GM12878 (cell line): ENCODE measurements at regions of chr11 and their contacts with region 1.

Region 1: DNA sequence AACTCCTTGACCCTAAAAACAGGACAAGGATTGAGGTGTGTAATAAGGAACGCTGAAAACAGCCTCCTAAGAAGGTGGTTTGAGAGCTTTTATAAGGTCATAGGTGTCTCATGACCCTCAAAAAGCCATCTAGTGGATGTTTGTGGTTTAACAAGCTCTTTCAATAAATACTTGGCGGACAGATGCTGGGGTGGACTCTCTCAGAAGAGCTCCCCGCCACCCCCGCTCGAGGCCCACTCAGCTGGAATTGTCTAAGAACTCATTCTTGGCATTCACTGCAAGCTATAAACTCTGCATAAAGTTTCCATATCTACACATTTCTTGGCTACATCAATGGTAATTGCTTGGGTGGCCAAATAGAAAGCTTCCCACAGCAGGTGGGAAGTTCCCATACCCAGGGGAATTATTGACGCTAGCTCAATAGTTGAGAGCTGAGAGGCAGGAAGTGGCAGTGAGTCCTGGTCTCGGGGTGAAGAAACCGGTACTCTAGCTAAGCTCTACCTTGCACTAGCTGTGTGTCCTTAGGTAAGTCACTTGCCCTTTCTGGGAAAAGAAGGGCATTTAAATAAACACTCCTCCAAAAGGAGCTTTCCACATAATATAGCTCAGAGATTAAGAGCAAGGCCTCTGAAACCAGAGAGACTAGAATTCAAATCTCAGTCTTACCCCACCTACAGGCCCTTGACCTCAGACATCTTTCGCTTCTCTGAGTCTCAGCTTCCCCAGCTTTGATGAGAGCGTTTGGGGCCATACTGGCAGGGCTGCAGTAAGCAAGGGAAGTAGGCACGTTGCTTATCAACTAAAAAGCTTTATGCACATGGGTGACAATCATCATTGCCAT is 6.4 kb downstream of the MS4A15 start:
- DNase-seq: peak; percentile 94
- ATAC-seq: peak; percentile 82
- H3K4me3 ChIP-seq: peak overlapping the region; percentile 0; the same call in 1 of the 2 replicates
- H3K27ac ChIP-seq: peak overlapping the region; percentile 96
- H3K4me1 ChIP-seq: peaks cover 61% of the 10 kb centered on the region
- H3K27me3 ChIP-seq: no peaks in the 10 kb centered on the region
- CTCF ChIP-seq: peak; percentile 35 to 64 (median 54); a peak in 5 of 6 replicates
- EP300 ChIP-seq: peak; percentile 70 to 79; a peak in 3 of 4 replicates
- POLR2A ChIP-seq: no peak; the same call in 1 of the 2 replicates
- RAD21 ChIP-seq: peak; percentile 36; the same call in 1 of the 2 replicates

Region 2: GRCh38 chr11:60265373-60266214 is 497.5 kb before region 1 on chr11:
- CTCF ChIA-PET with region 1: interaction called, 3 read pairs
- POLR2A ChIA-PET with region 1: no interaction called
- RAD21 ChIA-PET with region 1: no interaction called
- SMC1A ChIA-PET with region 1: interaction called, 3 read pairs
- in situ Hi-C with region 1: no loop called
- intact Hi-C with region 1: loop called (anchors 5 kb)
- DNase-seq: peak; percentile 44
- ATAC-seq: peak; percentile 76
- H3K4me3 ChIP-seq: no peak overlapping the region
- H3K27ac ChIP-seq: no peak overlapping the region
- H3K4me1 ChIP-seq: no peaks in the 10 kb centered on the region
- H3K27me3 ChIP-seq: no peaks in the 10 kb centered on the region
- CTCF ChIP-seq: peak; percentile 49 to 80 (median 74); a peak in 5 of 6 replicates
- EP300 ChIP-seq: no peak
- POLR2A ChIP-seq: no peak
- RAD21 ChIP-seq: peak; percentile 96

Region 3: DNA sequence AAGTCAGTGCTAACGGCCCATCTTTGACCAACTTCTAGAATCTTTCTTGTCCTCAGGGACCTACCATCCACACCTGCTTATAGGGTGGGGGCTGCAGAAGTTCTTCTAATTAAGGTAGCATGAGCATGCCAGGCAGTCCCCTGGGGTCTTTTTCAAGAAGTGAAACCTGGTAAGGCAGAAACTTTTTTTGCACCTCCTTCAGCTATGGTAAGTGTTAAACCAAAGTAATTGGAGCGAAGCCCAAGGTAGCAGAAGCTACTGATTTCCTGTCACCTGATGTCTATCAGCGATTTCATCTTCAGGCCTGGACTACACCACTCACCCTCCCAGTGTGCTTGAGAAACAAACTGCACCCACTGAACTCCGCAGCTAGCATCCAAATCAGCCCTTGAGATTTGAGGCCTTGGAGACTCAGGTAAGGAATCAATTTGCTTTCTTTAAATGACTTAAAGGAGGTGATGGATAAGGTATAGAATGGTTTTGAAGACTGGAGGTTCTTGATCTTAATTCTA is 307.5 kb before region 1 on chr11 and contains the start of gene MS4A1:
- CTCF ChIA-PET with region 1: interaction called, 25 read pairs
- POLR2A ChIA-PET with region 1: interaction called, 3 read pairs
- RAD21 ChIA-PET with region 1: interaction called, 27 read pairs
- SMC1A ChIA-PET with region 1: interaction called, 16 read pairs
- in situ Hi-C with region 1: no loop called
- intact Hi-C with region 1: no loop called
- DNase-seq: peak; percentile 98
- ATAC-seq: peak; percentile 82
- H3K4me3 ChIP-seq: peak within 1 kb of the TSS; percentile 89
- H3K27ac ChIP-seq: peak within 1 kb of the TSS; percentile 93
- H3K4me1 ChIP-seq: peaks cover 21% of the 10 kb centered on the region
- H3K27me3 ChIP-seq: no peaks in the 10 kb centered on the region
- CTCF ChIP-seq: no peak
- EP300 ChIP-seq: peak; percentile 98 to 99
- POLR2A ChIP-seq: peak; percentile 90
- RAD21 ChIP-seq: 0 out of 2 replicates have a peak, but pooled peaks have one; percentile 14
- polyA plus RNA-seq, gene MS4A1: 730 to 1,013 TPM

Region 4: GRCh38 chr11:60680455-60681119 is 82.5 kb before region 1 on chr11:
- CTCF ChIA-PET with region 1: interaction called, 18 read pairs
- POLR2A ChIA-PET with region 1: interaction called, 4 read pairs
- RAD21 ChIA-PET with region 1: interaction called, 20 read pairs
- SMC1A ChIA-PET with region 1: interaction called, 12 read pairs
- in situ Hi-C with region 1: no loop called
- intact Hi-C with region 1: loop called (anchors 1 kb)
- DNase-seq: no peak
- ATAC-seq: no peak
- H3K4me3 ChIP-seq: no peak overlapping the region
- H3K27ac ChIP-seq: no peak overlapping the region
- H3K4me1 ChIP-seq: peaks cover 14% of the 10 kb centered on the region
- H3K27me3 ChIP-seq: no peaks in the 10 kb centered on the region
- CTCF ChIP-seq: no peak
- EP300 ChIP-seq: no peak
- POLR2A ChIP-seq: no peak
- RAD21 ChIP-seq: no peak

Region 5: GRCh38 chr11:60775420-60775961 is 12.4 kb after region 1 on chr11:
- CTCF ChIA-PET with region 1: interaction called, 184 read pairs
- POLR2A ChIA-PET with region 1: interaction called, 7 read pairs
- RAD21 ChIA-PET with region 1: interaction called, 119 read pairs
- SMC1A ChIA-PET with region 1: interaction called, 143 read pairs
- in situ Hi-C with region 1: no loop called
- intact Hi-C with region 1: no loop called
- DNase-seq: peak; percentile 67
- ATAC-seq: peak; percentile 94
- H3K4me3 ChIP-seq: no peak overlapping the region
- H3K27ac ChIP-seq: no peak overlapping the region
- H3K4me1 ChIP-seq: peaks cover 11% of the 10 kb centered on the region
- H3K27me3 ChIP-seq: no peaks in the 10 kb centered on the region
- CTCF ChIP-seq: peak; percentile 86 to 94 (median 89)
- EP300 ChIP-seq: no peak
- POLR2A ChIP-seq: no peak
- RAD21 ChIP-seq: peak; percentile 81

Region 6: DNA sequence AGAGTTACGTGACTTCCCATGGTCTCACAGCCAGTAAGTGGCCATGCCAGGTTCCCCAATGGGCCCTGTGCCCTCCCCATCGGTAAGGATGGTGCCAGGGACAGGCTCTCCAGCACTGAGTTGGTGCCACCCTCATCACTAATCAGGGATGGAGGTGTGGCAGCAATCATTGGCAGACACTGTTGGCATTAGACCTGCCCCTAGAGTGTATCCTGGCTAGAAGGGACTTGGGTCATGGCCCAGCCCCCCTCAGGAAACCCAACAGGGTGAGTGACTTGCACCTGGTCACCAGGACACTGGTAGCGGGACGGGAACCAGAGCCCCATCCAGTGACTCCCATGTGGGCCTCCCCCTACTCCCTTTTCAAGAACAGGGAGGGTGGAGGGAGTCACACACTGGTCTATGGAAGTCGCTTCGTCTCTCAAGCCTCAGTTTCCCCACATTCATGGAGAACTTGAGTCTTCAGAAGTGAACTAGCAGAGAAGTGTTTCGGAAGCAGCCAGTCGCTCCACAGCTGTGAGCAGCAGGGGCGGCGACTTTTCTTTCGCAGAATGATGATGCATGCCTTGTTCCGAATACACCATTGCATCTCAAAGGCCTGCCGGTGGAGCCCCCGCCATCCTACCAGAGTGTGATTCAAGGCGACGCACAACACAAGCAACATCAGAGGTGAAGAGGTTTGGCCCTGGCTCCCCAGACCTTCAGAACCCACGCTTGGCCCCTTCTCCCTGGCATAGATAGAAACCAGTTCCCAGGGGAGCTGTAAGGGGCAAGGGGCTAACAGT is 35.0 kb after region 1 on chr11:
- CTCF ChIA-PET with region 1: no interaction called
- POLR2A ChIA-PET with region 1: no interaction called
- RAD21 ChIA-PET with region 1: no interaction called
- SMC1A ChIA-PET with region 1: no interaction called
- in situ Hi-C with region 1: no loop called
- intact Hi-C with region 1: no loop called
- DNase-seq: no peak
- ATAC-seq: no peak
- H3K4me3 ChIP-seq: no peak overlapping the region
- H3K27ac ChIP-seq: no peak overlapping the region
- H3K4me1 ChIP-seq: no peaks in the 10 kb centered on the region
- H3K27me3 ChIP-seq: no peaks in the 10 kb centered on the region; a peak in 1 of 4 replicates
- CTCF ChIP-seq: no peak
- EP300 ChIP-seq: no peak
- POLR2A ChIP-seq: no peak
- RAD21 ChIP-seq: no peak

Region 7: GRCh38 chr11:60899046-60899936 is 136.2 kb after region 1 on chr11:
- CTCF ChIA-PET with region 1: interaction called, 11 read pairs
- POLR2A ChIA-PET with region 1: no interaction called
- RAD21 ChIA-PET with region 1: interaction called, 4 read pairs
- SMC1A ChIA-PET with region 1: interaction called, 4 read pairs
- in situ Hi-C with region 1: no loop called
- intact Hi-C with region 1: no loop called
- DNase-seq: no peak
- ATAC-seq: peak; percentile 93
- H3K4me3 ChIP-seq: no peak overlapping the region
- H3K27ac ChIP-seq: no peak overlapping the region
- H3K4me1 ChIP-seq: no peaks in the 10 kb centered on the region; the same call in 1 of the 2 replicates
- H3K27me3 ChIP-seq: no peaks in the 10 kb centered on the region
- CTCF ChIP-seq: peak; percentile 85 to 98 (median 94)
- EP300 ChIP-seq: no peak
- POLR2A ChIP-seq: no peak
- RAD21 ChIP-seq: peak; percentile 64

Region 8: GRCh38 chr11:61161190-61162091 is 398.4 kb after region 1 on chr11 and contains the start of gene VPS37C:
- CTCF ChIA-PET with region 1: interaction called, 4 read pairs
- POLR2A ChIA-PET with region 1: interaction called, 6 read pairs
- RAD21 ChIA-PET with region 1: interaction called, 5 read pairs
- SMC1A ChIA-PET with region 1: interaction called, 3 read pairs
- in situ Hi-C with region 1: no loop called
- intact Hi-C with region 1: loop called (anchors 10 kb)
- DNase-seq: peak; percentile 71
- ATAC-seq: peak; percentile 80
- H3K4me3 ChIP-seq: peak within 1 kb of the TSS; percentile 86
- H3K27ac ChIP-seq: peak within 1 kb of the TSS; percentile 96
- H3K4me1 ChIP-seq: peaks cover 39% of the 10 kb centered on the region
- H3K27me3 ChIP-seq: no peaks in the 10 kb centered on the region
- CTCF ChIP-seq: no peak
- EP300 ChIP-seq: peak in 1 of 2 experiments; percentile 27; a peak in 1 of 4 replicates
- POLR2A ChIP-seq: peak; percentile 86
- RAD21 ChIP-seq: no peak
- polyA plus RNA-seq, gene VPS37C: 0.39 to 0.88 TPM

Region 9: DNA sequence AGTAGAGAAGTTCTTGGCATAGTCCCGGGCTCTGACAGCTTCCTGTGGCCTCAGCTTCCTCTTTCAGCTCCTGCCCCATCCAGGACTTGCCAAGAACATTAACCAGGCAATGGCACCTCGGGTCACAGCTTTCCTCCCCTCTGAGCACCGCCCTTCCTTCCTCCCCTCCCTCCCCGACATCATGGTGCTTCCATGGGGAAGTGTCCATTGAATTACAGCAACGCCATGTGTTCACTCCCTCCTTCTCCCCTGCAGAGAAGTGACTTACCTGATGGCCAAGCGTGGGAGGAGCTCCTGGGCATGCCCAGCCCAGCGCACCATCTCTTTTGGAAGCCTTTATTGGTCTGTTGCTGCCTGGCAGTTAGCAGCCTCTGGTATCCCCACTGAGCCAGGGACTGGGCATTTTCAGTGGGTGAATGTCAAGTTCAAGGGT is 891.3 kb after region 1 on chr11:
- CTCF ChIA-PET with region 1: no interaction called
- POLR2A ChIA-PET with region 1: no interaction called
- RAD21 ChIA-PET with region 1: no interaction called
- SMC1A ChIA-PET with region 1: no interaction called
- in situ Hi-C with region 1: no loop called
- intact Hi-C with region 1: no loop called
- DNase-seq: no peak
- ATAC-seq: no peak; the same call in 2 of the 3 replicates
- H3K4me3 ChIP-seq: no peak overlapping the region
- H3K27ac ChIP-seq: no peak overlapping the region
- H3K4me1 ChIP-seq: no peaks in the 10 kb centered on the region
- H3K27me3 ChIP-seq: no peaks in the 10 kb centered on the region; a peak in 2 of 4 replicates
- CTCF ChIP-seq: no peak
- EP300 ChIP-seq: no peak
- POLR2A ChIP-seq: no peak
- RAD21 ChIP-seq: no peak